Left cardiac atrium (tissue), 4 donors: ENCODE measurements at regions of chr15 and their contacts with region 1.

Region 1: GRCh38 chr15:61871926-61872522 is 188.2 kb downstream of the VPS13C start:
- DNase-seq: no peak
- ATAC-seq: no peak

Region 2: DNA sequence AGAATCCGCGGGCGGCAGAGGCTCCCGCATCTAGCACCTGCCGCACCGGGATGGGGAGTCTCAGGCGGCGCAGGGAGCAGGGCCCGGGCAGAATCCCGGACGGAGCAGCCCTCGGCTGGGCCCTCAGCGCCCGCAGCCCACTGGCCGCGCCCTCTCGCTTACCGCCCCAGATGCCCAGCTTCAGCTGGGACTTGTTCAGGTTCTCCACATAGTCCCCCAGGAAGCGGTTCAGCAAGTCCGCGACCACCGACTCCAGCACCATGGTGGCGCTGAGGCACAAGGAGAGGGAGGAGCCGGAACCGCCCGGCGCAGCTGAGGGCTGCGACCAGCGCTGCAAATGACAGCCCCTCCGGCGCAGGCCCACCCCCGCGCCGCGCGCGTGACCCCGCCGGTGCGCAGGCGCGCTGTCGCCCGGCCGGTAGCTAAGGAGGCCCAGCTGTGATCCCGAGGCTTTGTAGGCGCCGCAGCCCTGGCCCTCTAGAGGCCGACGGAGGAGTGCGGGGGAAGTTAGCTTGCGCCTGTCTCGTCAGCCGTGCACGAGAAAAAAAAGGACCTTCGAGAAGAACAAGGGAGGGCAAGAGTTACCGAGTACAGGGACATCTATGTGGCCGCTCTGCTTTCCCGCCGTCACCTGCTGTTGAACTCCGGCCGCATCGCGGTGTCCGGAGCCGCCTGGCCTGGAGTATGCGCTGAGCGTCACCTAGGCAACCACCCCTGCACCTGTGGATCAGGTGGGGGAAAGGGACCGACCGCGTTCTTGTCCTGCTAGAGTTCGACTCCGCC is 188.3 kb after region 1 on chr15 and contains the start of gene VPS13C:
- intact Hi-C with region 1: loop called in 1 of 2 experiments (anchors 10 kb)
- DNase-seq: peak; percentile 94
- ATAC-seq: peak; percentile 99 to 100
- total RNA-seq, gene VPS13C: 33.2 to 34.5 TPM

Region 3: DNA sequence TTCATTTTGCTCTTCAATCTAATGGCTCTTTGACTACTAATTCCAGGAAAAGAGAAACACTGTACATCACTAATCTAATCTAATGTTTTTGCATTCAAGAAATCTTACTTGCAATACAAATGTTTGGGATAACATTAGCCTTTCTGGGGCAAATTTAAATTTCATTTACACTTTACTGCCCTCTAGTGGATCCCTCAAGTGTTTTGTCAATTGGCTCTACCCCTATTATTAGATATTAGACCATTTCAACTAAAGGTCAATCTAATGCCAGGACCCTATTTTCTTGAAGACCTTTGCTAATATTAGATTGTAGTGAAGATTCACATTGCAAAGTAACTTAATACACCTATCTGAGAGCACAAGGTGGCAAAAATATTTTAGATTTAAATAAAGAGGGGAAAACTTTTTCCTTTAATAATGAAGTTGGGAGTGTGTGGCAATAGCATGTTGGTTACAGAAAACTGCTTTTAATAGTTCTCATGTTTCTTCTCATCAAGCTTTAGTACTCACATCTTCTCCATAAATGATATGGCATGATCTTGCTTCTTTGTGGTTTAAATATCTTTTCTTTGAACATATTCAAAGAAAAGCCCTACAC is 199.8 kb after region 1 on chr15:
- intact Hi-C with region 1: loop called (anchors 10 kb)
- DNase-seq: no peak
- ATAC-seq: no peak

Region 4: GRCh38 chr15:62306851-62307504 is 435.0 kb after region 1 on chr15:
- intact Hi-C with region 1: loop called in 1 of 2 experiments (anchors 5 kb)
- DNase-seq: peak; percentile 61
- ATAC-seq: peak; percentile 89 to 93